Endothelial cell of umbilical vein (primary cell): ENCODE measurements at regions of chr6 and their contacts with region 1.

Region 1: GRCh38 chr6:125944434-125944816 is 12.1 kb upstream of the HINT3 start:
- DNase-seq: peak; percentile 98
- H3K4me3 ChIP-seq: no peak overlapping the region
- H3K27ac ChIP-seq: peak overlapping the region; percentile 89
- H3K4me1 ChIP-seq: peaks cover 40% of the 10 kb centered on the region
- H3K27me3 ChIP-seq: no peaks in the 10 kb centered on the region
- CTCF ChIP-seq: no peak
- POLR2A ChIP-seq: no peak

Region 2: GRCh38 chr6:125077444-125077843 is 867.0 kb before region 1 on chr6:
- CTCF ChIA-PET with region 1: no interaction called
- POLR2A ChIA-PET with region 1: no interaction called
- dilution Hi-C with region 1: no loop called
- intact Hi-C with region 1: no loop called
- DNase-seq: no peak
- H3K4me3 ChIP-seq: no peak overlapping the region
- H3K27ac ChIP-seq: no peak overlapping the region
- H3K4me1 ChIP-seq: no peaks in the 10 kb centered on the region
- H3K27me3 ChIP-seq: no peaks in the 10 kb centered on the region
- CTCF ChIP-seq: no peak
- POLR2A ChIP-seq: no peak

Region 3: DNA sequence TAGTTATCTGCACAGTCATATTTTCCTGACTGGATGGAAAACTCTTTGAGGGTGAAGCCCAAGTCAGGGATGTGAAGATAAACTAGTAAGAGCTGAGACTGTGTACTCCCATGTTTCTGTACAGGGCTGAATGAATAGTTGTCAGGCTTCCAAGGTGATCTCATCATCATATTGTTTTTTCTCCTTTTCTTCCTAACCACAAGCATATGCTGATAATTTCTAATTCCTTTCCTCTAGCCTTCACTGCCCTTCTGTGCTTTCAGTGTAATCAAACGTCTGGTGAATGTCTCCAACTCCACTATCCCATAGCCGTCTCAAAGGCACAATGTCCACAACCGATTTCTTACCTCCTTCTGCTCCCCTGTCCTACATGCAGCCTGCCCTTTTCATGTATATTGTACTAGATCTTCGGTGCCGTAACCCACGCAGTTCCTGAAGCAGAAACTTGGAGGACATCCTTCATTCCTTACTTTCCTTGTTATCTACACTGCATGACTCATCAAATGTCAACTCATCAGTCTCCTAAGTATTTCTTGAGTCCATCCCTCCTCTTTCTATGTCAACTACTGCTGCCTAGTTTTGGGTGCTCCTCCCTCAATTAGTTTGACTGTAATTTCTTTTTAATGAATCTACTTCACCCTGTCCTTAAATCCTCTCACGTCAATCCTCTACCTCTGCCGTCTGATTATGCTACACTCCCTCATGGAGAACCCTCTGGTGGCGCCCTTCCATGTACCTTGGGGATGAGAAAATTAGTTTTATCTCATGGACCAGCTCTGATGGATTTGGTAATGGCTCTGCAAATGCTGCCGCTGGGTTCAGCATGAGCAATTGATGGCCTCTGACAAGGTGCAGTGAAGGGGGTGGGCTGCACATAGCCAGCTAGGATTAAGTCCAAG is 131.8 kb before region 1 on chr6:
- CTCF ChIA-PET with region 1: no interaction called
- POLR2A ChIA-PET with region 1: no interaction called
- dilution Hi-C with region 1: no loop called
- intact Hi-C with region 1: no loop called
- DNase-seq: peak; percentile 98
- H3K4me3 ChIP-seq: peak overlapping the region in 1 of 3 experiments; percentile 31
- H3K27ac ChIP-seq: peak overlapping the region; percentile 94
- H3K4me1 ChIP-seq: peaks cover 46% of the 10 kb centered on the region
- H3K27me3 ChIP-seq: no peaks in the 10 kb centered on the region
- CTCF ChIP-seq: no peak
- POLR2A ChIP-seq: peak; percentile 37

Region 4: GRCh38 chr6:125906158-125906998 is 38.0 kb before region 1 on chr6:
- CTCF ChIA-PET with region 1: interaction called, 5 read pairs
- POLR2A ChIA-PET with region 1: no interaction called
- dilution Hi-C with region 1: no loop called
- intact Hi-C with region 1: loop called (anchors 2 kb)
- DNase-seq: peak; percentile 65
- H3K4me3 ChIP-seq: no peak overlapping the region
- H3K27ac ChIP-seq: no peak overlapping the region
- H3K4me1 ChIP-seq: peaks cover 26% of the 10 kb centered on the region
- H3K27me3 ChIP-seq: no peaks in the 10 kb centered on the region
- CTCF ChIP-seq: peak; percentile 80 to 83
- POLR2A ChIP-seq: no peak

Region 5: DNA sequence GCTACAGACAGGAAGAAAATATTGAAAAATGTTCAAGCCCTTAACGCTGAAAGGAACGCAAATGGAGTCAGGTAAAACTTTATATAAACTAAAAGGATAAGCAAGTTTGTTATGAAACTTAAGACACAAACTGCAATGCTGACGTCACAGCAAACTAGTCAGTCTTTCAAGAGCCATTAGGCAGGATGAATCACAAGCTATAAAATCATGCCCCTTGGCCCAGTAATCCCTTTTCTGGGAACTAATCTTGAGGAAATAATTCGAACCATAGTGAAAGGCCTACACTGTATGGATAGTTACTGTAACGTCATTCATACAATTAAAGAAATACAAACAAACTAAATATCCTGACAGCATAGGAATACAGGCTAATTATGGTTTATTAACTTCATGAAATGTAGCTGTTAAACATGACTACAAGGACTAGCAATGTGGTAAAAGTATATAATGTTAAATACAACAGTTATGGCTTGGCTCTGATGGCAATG is 30.5 kb before region 1 on chr6:
- CTCF ChIA-PET with region 1: interaction called, 20 read pairs
- POLR2A ChIA-PET with region 1: no interaction called
- dilution Hi-C with region 1: no loop called
- intact Hi-C with region 1: loop called (anchors 2 kb)
- DNase-seq: peak; percentile 78
- H3K4me3 ChIP-seq: no peak overlapping the region
- H3K27ac ChIP-seq: peak overlapping the region; percentile 15
- H3K4me1 ChIP-seq: peaks cover 39% of the 10 kb centered on the region
- H3K27me3 ChIP-seq: no peaks in the 10 kb centered on the region
- CTCF ChIP-seq: no peak
- POLR2A ChIP-seq: no peak

Region 6: DNA sequence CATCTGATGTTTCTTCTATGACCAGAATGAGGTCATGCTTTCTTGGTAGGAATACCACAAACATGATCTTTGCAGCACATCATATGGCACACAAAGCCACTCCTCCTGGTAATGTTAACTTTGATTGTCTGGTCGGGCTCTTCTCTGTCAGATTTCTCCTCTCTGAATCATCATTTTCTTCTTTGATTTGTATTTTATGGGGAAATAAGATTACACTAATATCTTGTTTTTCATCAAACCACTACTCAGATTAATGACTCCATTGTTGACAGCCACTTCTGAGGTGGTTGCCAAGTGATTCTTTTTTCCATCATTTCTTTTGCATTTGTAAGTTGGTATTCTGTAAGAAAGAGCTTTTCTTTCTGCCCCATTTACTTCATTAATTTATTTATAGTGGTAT is 71.4 kb after region 1 on chr6:
- CTCF ChIA-PET with region 1: no interaction called
- POLR2A ChIA-PET with region 1: no interaction called
- dilution Hi-C with region 1: no loop called
- intact Hi-C with region 1: no loop called
- DNase-seq: peak; percentile 47
- H3K4me3 ChIP-seq: no peak overlapping the region
- H3K27ac ChIP-seq: no peak overlapping the region
- H3K4me1 ChIP-seq: no peaks in the 10 kb centered on the region
- H3K27me3 ChIP-seq: no peaks in the 10 kb centered on the region
- CTCF ChIP-seq: no peak
- POLR2A ChIP-seq: no peak